HCT116 (cell line): ENCODE measurements at regions of chr22 and their contacts with region 1.

Region 1: DNA sequence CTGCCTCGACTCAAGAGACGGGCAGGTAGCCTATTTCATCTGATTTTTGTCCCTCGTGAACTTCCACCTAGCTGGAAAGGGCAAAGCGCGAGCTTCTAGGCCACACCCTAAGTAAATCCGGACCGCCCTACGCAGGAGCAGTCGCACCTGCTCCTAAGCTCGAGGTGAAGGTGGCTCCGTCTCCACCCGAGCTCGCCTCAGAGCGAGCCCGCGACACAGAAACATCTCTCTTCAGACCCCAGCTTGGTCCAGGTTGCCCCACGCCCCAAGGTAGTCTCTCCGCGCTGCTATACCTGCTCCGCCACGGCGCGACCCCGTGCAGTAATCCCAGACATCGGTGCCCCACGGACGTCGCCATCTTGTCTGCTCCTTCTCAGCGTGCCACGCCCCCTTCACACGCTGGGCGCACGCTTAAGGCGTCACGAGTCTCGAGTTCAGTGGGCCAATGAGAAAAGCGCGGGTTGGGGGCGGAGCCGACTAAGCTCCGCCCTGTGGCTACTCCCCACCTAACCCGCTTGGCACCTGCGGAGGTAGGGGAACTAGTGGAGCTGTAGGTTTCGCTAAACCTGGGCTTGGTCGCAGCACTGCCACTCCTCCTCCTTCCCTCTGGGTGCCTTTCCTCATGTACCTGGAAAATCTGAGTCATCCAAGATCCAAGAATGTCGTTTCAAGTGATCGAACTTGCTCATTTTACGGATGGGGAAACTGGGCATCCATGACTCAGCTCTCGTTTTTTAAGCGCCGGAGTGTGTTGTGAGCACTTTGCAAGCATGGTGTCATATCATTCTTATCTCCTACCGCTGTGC is at the start of gene PISD:
- DNase-seq: peak; percentile 96
- ATAC-seq: peak; percentile 88
- H3K4me3 ChIP-seq: peak within 1 kb of the TSS; percentile 85 to 89
- H3K27ac ChIP-seq: peak within 1 kb of the TSS; percentile 88
- H3K4me1 ChIP-seq: peaks cover 19 to 51% of the 10 kb centered on the region in 2 experiments
- H3K27me3 ChIP-seq: no peaks in the 10 kb centered on the region
- CTCF ChIP-seq: no peak
- POLR2A ChIP-seq: peak; percentile 83
- RAD21 ChIP-seq: no peak
- total RNA-seq, gene PISD: 47.1 TPM

Region 2: GRCh38 chr22:31646186-31647089 is 15.6 kb before region 1 on chr22:
- CTCF ChIA-PET with region 1: no interaction called
- POLR2A ChIA-PET with region 1: interaction called, 10 read pairs
- RAD21 ChIA-PET with region 1: interaction called, 3 read pairs
- intact Hi-C with region 1: no loop called
- DNase-seq: peak; percentile 91
- ATAC-seq: peak; percentile 92
- H3K4me3 ChIP-seq: peak overlapping the region in 1 of 2 experiments; percentile 12; a peak in 1 of 4 replicates
- H3K27ac ChIP-seq: peak overlapping the region; percentile 75
- H3K4me1 ChIP-seq: peaks cover 38 to 73% of the 10 kb centered on the region in 2 experiments
- H3K27me3 ChIP-seq: no peaks in the 10 kb centered on the region
- CTCF ChIP-seq: no peak
- POLR2A ChIP-seq: no peak
- RAD21 ChIP-seq: no peak

Region 3: GRCh38 chr22:31749636-31750364 is 87.7 kb after region 1 on chr22 and contains the start of gene PRR14L:
- CTCF ChIA-PET with region 1: interaction called, 6 read pairs
- POLR2A ChIA-PET with region 1: interaction called, 12 read pairs
- RAD21 ChIA-PET with region 1: no interaction called
- intact Hi-C with region 1: loop called (anchors 2 kb)
- DNase-seq: peak; percentile 91
- ATAC-seq: peak; percentile 67
- H3K4me3 ChIP-seq: peak within 1 kb of the TSS; percentile 70 to 98
- H3K27ac ChIP-seq: peak within 1 kb of the TSS; percentile 95
- H3K4me1 ChIP-seq: peaks cover 27 to 51% of the 10 kb centered on the region in 2 experiments; a peak in 3 of 4 replicates
- H3K27me3 ChIP-seq: no peaks in the 10 kb centered on the region
- CTCF ChIP-seq: 0 out of 6 replicates have a peak, but pooled peaks of 1 of the 3 experiments have one; percentile 2
- POLR2A ChIP-seq: peak; percentile 37
- RAD21 ChIP-seq: no peak; the same call in 1 of the 2 replicates
- total RNA-seq, gene PRR14L: 61.5 TPM

Region 4: GRCh38 chr22:31943976-31944699 is 282.1 kb after region 1 on chr22 and contains the start of gene YWHAH:
- CTCF ChIA-PET with region 1: interaction called, 16 read pairs
- POLR2A ChIA-PET with region 1: interaction called, 3 read pairs
- RAD21 ChIA-PET with region 1: no interaction called
- intact Hi-C with region 1: loop called (anchors 1 kb)
- DNase-seq: peak; percentile 71
- ATAC-seq: peak; percentile 81
- H3K4me3 ChIP-seq: peak within 1 kb of the TSS; percentile 78 to 87
- H3K27ac ChIP-seq: peak within 1 kb of the TSS; percentile 98
- H3K4me1 ChIP-seq: peaks cover 22 to 31% of the 10 kb centered on the region in 2 experiments
- H3K27me3 ChIP-seq: no peaks in the 10 kb centered on the region
- CTCF ChIP-seq: no peak
- POLR2A ChIP-seq: peak; percentile 97
- RAD21 ChIP-seq: no peak
- total RNA-seq, gene YWHAH: 140 TPM

Region 5: GRCh38 chr22:31958625-31959239 is 296.7 kb after region 1 on chr22:
- CTCF ChIA-PET with region 1: interaction called, 5 read pairs
- POLR2A ChIA-PET with region 1: interaction called, 10 read pairs
- RAD21 ChIA-PET with region 1: interaction called, 3 to 4 read pairs
- intact Hi-C with region 1: no loop called
- DNase-seq: no peak
- ATAC-seq: no peak
- H3K4me3 ChIP-seq: no peak overlapping the region
- H3K27ac ChIP-seq: no peak overlapping the region
- H3K4me1 ChIP-seq: no peaks in the 10 kb centered on the region
- H3K27me3 ChIP-seq: no peaks in the 10 kb centered on the region
- CTCF ChIP-seq: no peak
- POLR2A ChIP-seq: no peak
- RAD21 ChIP-seq: no peak

Region 6: DNA sequence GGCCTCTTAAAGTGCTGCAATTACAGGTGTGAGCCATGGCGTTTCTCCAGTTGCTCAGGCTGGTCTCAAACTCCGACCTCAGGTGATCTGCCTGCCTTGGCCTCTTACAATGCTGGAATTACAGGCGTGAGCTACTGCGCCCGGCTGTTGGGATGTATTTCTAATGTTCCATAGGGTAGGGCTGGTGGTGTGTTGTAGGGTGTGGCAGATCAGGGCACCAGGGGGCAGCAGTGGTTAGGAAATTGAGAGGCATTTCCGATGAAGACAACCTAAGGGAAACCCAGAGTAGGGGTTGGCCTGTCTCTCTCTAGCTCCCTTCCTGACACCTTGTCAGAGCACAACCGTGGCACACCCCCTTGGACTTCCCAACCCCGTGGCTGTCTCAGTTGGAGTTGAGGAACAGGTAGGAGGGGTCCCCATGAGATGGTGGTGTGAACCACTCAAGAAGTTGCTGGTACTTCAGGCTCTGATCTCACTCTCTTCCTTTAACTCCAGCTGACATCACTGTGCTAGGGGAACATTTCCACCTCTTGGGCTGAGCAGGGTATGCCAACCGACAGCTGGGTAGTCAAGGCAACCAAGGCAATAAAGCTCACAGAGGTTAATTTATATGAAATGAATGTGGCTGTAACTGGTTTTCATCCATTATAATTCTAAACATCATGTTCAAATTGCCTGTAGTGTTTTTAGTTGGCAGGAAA is 315.2 kb after region 1 on chr22:
- CTCF ChIA-PET with region 1: interaction called, 143 read pairs
- POLR2A ChIA-PET with region 1: no interaction called
- RAD21 ChIA-PET with region 1: interaction called, 3 to 4 read pairs
- intact Hi-C with region 1: no loop called
- DNase-seq: peak; percentile 81
- ATAC-seq: peak; percentile 99
- H3K4me3 ChIP-seq: no peak overlapping the region
- H3K27ac ChIP-seq: no peak overlapping the region
- H3K4me1 ChIP-seq: peaks cover 0 to 6% of the 10 kb centered on the region in 2 experiments; a peak in 2 of 4 replicates
- H3K27me3 ChIP-seq: no peaks in the 10 kb centered on the region
- CTCF ChIP-seq: peak; percentile 84 to 92 (median 86)
- POLR2A ChIP-seq: no peak
- RAD21 ChIP-seq: peak; percentile 98